Mammary epithelial cell (primary cell): ENCODE measurements at regions of chr12 and their contacts with region 1.

Region 1: GRCh38 chr12:52390739-52391617 is 5.5 kb upstream of the KRT84 start:
- DNase-seq: no peak
- H3K4me3 ChIP-seq: no peak overlapping the region
- H3K27ac ChIP-seq: peak overlapping the region; percentile 19
- H3K4me1 ChIP-seq: peaks cover 59% of the 10 kb centered on the region
- H3K27me3 ChIP-seq: no peaks in the 10 kb centered on the region
- CTCF ChIP-seq: peak; percentile 89 to 90

Region 2: GRCh38 chr12:52295663-52296062 is 95.3 kb before region 1 on chr12:
- CTCF ChIA-PET with region 1: no interaction called
- dilution Hi-C with region 1: no loop called
- in situ Hi-C with region 1: loop called in 1 of 2 experiments (anchors 5 kb)
- intact Hi-C with region 1: no loop called
- DNase-seq: peak; percentile 69
- H3K4me3 ChIP-seq: no peak overlapping the region
- H3K27ac ChIP-seq: no peak overlapping the region
- H3K4me1 ChIP-seq: peaks cover 3% of the 10 kb centered on the region
- H3K27me3 ChIP-seq: no peaks in the 10 kb centered on the region
- CTCF ChIP-seq: no peak

Region 3: GRCh38 chr12:52454411-52455216 is 63.6 kb after region 1 on chr12:
- CTCF ChIA-PET with region 1: no interaction called
- dilution Hi-C with region 1: no loop called
- in situ Hi-C with region 1: loop called in 1 of 2 experiments (anchors 10 kb)
- intact Hi-C with region 1: loop called (anchors 2 kb)
- DNase-seq: peak; percentile 82
- H3K4me3 ChIP-seq: no peak overlapping the region
- H3K27ac ChIP-seq: peak overlapping the region; percentile 85
- H3K4me1 ChIP-seq: peaks cover 36% of the 10 kb centered on the region
- H3K27me3 ChIP-seq: no peaks in the 10 kb centered on the region
- CTCF ChIP-seq: no peak

Region 4: GRCh38 chr12:52515927-52516831 is 125.2 kb after region 1 on chr12:
- CTCF ChIA-PET with region 1: interaction called, 6 read pairs
- dilution Hi-C with region 1: no loop called
- in situ Hi-C with region 1: loop called in 1 of 2 experiments (anchors 5 kb)
- intact Hi-C with region 1: loop called (anchors 1 kb)
- DNase-seq: peak; percentile 82
- H3K4me3 ChIP-seq: peak overlapping the region; percentile 66 to 94 (median 79)
- H3K27ac ChIP-seq: peak overlapping the region; percentile 82
- H3K4me1 ChIP-seq: peaks cover 30% of the 10 kb centered on the region
- H3K27me3 ChIP-seq: no peaks in the 10 kb centered on the region
- CTCF ChIP-seq: no peak

Region 5: GRCh38 chr12:52667511-52667910 is 276.5 kb after region 1 on chr12:
- CTCF ChIA-PET with region 1: no interaction called
- dilution Hi-C with region 1: no loop called
- in situ Hi-C with region 1: no loop called
- intact Hi-C with region 1: no loop called
- DNase-seq: no peak
- H3K4me3 ChIP-seq: no peak overlapping the region
- H3K27ac ChIP-seq: no peak overlapping the region
- H3K4me1 ChIP-seq: peaks cover 18% of the 10 kb centered on the region
- H3K27me3 ChIP-seq: peaks cover 2% of the 10 kb centered on the region
- CTCF ChIP-seq: peak in 1 of 2 donors; percentile 40

Region 6: DNA sequence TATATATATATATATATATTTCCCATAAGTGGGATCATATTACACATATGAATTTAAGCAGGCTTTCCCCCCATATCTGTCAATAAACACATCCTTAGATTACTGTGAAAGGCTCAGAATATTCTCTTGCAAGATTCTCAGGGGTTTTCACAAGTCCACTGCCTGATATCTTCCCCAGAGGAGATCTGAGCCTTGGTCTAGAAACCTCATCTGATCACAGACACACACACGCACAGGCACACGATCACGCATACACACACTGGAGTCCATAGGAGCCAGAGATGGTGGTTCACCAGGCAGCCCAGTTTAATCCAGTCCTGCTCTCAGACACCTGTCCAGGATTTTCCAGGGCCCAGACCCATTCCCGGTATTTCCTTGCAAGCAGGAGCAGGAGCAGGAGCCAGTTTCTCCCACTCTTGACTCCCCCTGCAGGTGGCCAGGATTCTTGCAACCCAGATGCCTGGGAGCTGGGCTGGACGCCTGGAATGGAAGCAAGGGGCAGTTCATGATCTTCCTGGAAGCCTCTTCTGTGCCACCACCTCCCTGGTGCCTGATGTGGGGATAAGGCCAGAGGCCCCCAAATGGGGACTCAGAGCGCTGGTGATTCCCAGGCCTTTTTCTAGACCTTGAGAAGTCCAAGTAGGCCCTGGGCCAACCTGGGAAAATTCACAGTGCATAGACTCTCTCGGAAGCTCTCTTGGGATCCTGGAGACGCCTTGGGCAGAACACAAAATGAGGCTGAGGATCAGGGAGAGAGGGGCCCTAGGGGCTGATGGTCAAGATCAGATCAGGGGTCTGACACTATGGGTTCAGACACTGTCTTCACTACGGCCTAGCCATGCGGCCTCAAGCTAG is 474.3 kb after region 1 on chr12:
- CTCF ChIA-PET with region 1: no interaction called
- dilution Hi-C with region 1: loop called (anchors 10 kb)
- in situ Hi-C with region 1: no loop called
- intact Hi-C with region 1: no loop called
- DNase-seq: peak; percentile 63
- H3K4me3 ChIP-seq: no peak overlapping the region
- H3K27ac ChIP-seq: no peak overlapping the region
- H3K4me1 ChIP-seq: peaks cover 23% of the 10 kb centered on the region
- H3K27me3 ChIP-seq: no peaks in the 10 kb centered on the region
- CTCF ChIP-seq: peak; percentile 87 to 92